Activated T-helper 2 cell treated with anti-CD3 and anti-CD28 coated beads, Interferon-gamma antibody, Interleukin-2, Interleukin-4, amounts not matched to agents 10 μg/mL and 5 μg/mL and 100 μg/mL, durations not matched to agents 14 hours and 24 hours and 36 hours (primary cell): ENCODE measurements at regions of chr22 and their contacts with region 1.

Region 1: DNA sequence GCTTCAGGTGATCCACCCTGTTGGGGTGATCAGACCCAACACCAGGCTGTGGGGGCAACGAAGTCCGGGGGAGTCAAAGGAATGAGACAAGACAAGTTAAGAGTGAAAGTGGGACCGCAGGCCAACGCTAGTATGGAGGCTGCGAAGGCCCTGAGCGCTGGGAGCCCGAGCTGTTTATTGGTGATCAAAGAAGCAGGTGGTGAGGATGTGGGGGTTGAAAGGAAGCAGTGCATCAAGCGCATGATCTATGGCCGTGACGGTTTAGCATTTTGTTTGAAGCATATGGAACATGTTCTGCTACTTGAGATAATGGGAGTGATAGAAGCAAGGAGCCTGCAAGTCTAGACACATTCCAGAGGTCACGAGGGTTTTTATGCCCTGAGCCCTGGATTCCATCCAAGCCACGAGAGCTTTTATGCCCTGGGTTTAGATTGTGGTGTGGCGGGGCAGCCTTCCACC is 49.5 kb downstream of the MCHR1 start:
- DNase-seq: peak; percentile 49
- H3K4me3 Mint-ChIP-seq: peak overlapping the region; percentile 51
- H3K27ac Mint-ChIP-seq: peak overlapping the region; percentile 58
- H3K4me1 Mint-ChIP-seq: peaks cover 42% of the 10 kb centered on the region
- H3K27me3 Mint-ChIP-seq: peaks cover under 1% of the 10 kb centered on the region

Region 2: DNA sequence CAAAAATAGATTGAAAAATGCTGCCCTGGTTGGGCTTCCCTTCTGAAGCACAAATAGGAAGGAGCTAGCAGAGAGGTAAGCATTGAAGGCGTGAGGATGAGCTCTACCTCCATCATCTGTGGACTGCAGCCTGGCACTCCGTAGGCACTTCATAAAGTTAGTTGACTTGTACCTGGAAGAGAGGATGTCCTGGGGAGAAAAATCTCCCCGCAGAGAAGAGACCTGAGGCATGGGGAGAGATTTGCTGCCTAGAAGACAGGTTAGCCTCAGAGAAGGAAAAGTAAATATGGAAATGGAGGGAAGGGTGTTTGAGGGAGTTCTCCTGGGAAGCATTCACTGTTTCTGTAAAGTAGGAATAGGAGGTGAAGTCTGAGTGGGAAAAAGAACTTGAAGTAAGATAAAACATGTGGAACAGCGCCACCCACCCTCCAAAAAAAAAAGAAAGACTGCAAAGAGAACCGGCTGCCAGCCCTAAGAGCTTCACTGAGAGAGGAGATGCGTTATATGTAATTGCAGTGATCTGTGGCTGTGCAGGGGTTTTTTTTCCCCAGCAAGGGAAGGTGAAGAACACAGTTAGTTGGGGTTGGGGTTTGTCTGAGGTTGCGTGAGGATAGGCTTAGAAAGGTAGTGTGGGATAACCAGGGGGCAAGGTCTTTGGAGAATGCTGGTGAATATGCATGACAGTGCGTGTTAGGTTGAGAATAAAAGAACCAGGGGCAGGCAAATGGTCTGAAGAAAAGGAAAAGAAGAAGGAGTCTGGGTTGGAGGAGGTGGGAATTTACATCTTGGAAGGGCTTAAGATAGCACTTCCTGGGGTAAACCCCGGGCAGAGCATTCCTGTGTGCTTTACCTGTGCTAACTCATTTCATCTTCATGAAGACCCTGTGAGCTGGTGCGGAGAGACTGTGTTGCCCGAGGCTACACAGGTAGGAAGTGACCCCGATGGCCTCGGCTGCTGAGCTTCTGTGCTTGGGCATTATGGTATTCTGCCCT is 535.0 kb before region 1 on chr22:
- intact Hi-C with region 1: no loop called
- DNase-seq: no peak
- H3K4me3 Mint-ChIP-seq: no peak overlapping the region
- H3K27ac Mint-ChIP-seq: peak overlapping the region; percentile 3
- H3K4me1 Mint-ChIP-seq: peaks cover 40% of the 10 kb centered on the region
- H3K27me3 Mint-ChIP-seq: no peaks in the 10 kb centered on the region

Region 3: DNA sequence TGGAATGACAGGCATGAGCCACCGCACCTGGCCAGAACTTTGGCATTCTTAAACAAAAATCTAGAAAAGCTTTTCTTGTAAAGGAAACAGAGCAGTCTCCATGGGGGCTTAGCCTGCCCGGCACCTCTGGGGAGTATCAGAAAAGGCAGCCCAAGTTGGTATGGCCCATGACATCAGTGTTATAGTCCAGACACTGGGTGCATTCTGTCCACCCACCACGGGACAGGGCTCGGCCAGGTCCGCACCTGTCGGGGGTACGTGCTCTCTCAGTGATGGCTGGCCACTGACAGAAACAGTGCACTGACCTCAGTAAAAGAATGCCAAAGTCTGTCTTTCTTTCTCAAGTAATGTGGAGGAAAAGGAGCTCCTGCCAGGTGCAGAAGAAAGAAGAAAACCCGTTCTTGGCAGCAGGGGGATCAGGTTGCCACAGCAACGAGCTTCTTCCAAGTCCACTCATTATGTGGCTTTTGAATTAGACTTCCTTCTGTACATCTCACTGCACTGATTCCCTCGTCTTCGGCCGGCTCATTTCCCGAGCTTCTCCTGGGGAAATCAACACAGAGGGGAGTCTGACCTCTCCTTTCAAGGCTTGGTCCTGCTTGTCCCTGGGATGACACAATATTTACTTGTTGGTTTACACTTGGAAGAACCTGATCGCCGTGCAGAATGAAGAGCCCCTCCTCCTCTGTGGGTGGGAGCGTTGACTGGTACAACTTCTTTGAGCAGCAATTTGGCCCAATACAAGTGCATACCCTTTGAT is 14.4 kb before region 1 on chr22:
- intact Hi-C with region 1: loop called (anchors 2 kb)
- DNase-seq: no peak
- H3K4me3 Mint-ChIP-seq: no peak overlapping the region
- H3K27ac Mint-ChIP-seq: no peak overlapping the region
- H3K4me1 Mint-ChIP-seq: peaks cover 27% of the 10 kb centered on the region
- H3K27me3 Mint-ChIP-seq: peaks cover 17% of the 10 kb centered on the region

Region 4: GRCh38 chr22:40950962-40951794 is 222.4 kb after region 1 on chr22 and contains the start of gene RBX1:
- intact Hi-C with region 1: no loop called
- DNase-seq: peak; percentile 98
- H3K4me3 Mint-ChIP-seq: peak within 1 kb of the TSS; percentile 95
- H3K27ac Mint-ChIP-seq: peak within 1 kb of the TSS; percentile 98
- H3K4me1 Mint-ChIP-seq: peaks cover 28% of the 10 kb centered on the region
- H3K27me3 Mint-ChIP-seq: no peaks in the 10 kb centered on the region
- total RNA-seq, gene RBX1: 103 and 110 TPM in 2 replicates